ENCODE measurements at regions of chr10 and their contacts with region 1.

Region 1: GRCh38 chr10:96089670-96090462 is 40.2 kb upstream of the ZNF518A start:
- DNase-seq: peak; percentile 97
- H3K4me3 ChIP-seq: peak overlapping the region; percentile 50 to 73 (median 59)
- H3K27ac ChIP-seq: peak overlapping the region; percentile 94 to 99 (median 96)
- H3K4me1 ChIP-seq: peaks cover 4 to 13% (median 8%) of the 10 kb centered on the region in 6 donors
- H3K27me3 ChIP-seq: peaks cover 0 to 30% (median 25%) of the 10 kb centered on the region in 7 donors
- CTCF ChIP-seq: no peak
- POLR2A ChIP-seq: peak in 1 of 3 donors; percentile 42

Region 2: GRCh38 chr10:96129387-96130325 is 39.8 kb after region 1 on chr10 and contains the start of gene ZNF518A:
- intact Hi-C with region 1: loop called (anchors 5 kb)
- DNase-seq: peak; percentile 97
- H3K4me3 ChIP-seq: peak within 1 kb of the TSS; percentile 43 to 83 (median 68)
- H3K27ac ChIP-seq: peak within 1 kb of the TSS; percentile 95 to 100 (median 98)
- H3K4me1 ChIP-seq: peaks cover 6 to 24% (median 20%) of the 10 kb centered on the region in 6 donors
- H3K27me3 ChIP-seq: peaks cover 0 to 41% (median 14%) of the 10 kb centered on the region in 7 donors
- CTCF ChIP-seq: peak in 3 of 11 experiments; percentile 10 to 19 (median 16)
- POLR2A ChIP-seq: peak in 1 of 3 donors; percentile 59
- total RNA-seq, gene ZNF518A: 22.0 to 45.7 (median 34.0) TPM

Measured in spleen (tissue), 13 donors.